ENCODE measurements at regions of chr1 and their contacts with region 1.

Region 1: GRCh38 chr1:232428786-232429530 is 201.0 kb downstream of the SIPA1L2 start:
- DNase-seq: no peak
- ATAC-seq: peak in 5 of 8 donors; percentile 36 to 63 (median 42)
- H3K4me3 ChIP-seq: no peak overlapping the region
- H3K27ac ChIP-seq: peak overlapping the region in 6 of 10 donors; percentile 47 to 68 (median 57)
- H3K4me1 ChIP-seq: peaks cover 0 to 65% (median 31%) of the 10 kb centered on the region in 9 donors
- H3K27me3 ChIP-seq: no peaks in the 10 kb centered on the region
- CTCF ChIP-seq: peak in 1 of 9 donors; percentile 7

Region 2: DNA sequence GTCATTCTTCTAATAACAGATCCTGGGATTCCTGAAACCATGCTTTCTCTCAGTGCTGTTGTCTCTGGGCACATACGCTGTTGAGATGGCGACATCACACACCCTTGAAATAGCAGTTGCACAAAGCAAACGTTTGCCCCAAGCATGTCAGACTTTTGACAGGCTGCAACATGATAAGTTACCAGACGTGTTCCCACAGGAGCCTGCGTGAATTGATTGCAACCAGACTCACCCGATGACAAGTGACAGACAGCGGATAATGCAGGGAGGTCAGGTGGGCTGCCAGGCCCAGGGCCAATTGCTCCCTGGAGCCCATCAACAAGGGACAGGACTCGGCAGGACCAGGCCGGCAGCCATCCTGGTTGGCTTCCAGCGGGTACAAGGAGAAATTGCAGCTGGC is 109.9 kb before region 1 on chr1:
- intact Hi-C with region 1: loop called in 1 of 10 experiments (anchors 10 kb)
- DNase-seq: peak; percentile 83 to 85
- ATAC-seq: peak; percentile 90 to 97 (median 95)
- H3K4me3 ChIP-seq: no peak overlapping the region
- H3K27ac ChIP-seq: peak overlapping the region; percentile 25 to 89 (median 78)
- H3K4me1 ChIP-seq: peaks cover 0 to 30% (median 3%) of the 10 kb centered on the region in 9 donors
- H3K27me3 ChIP-seq: no peaks in the 10 kb centered on the region
- CTCF ChIP-seq: no peak

Region 3: DNA sequence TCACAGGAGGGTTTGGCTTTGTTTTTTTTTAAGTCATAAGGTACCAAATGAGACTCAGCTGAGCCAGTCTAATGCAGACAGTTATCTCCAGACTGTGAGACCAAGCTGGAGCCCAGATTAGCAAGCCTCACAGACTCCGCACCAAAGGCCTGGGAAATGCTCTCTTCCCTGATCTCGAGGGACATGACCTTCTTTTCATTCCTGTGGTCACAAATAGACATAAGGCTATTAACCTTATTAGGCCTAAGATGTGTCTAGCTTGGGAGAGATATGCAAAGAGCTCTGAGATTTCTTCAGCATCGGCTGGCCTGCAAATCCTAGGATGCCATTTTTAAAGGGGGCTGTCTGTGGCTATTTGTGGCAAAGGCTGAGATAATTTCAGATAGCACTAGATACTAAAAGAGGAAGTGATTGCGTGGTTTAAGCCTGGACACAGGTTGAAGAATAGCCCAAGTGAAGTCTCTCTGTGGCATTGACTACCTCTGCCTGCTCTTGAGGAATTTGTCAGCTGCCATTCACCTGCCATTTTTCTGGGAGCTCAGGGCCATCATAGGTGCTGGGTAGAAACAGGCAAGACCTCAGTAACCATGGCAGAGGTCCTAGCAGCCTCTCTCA is 100.4 kb before region 1 on chr1:
- intact Hi-C with region 1: loop called in 1 of 10 experiments (anchors 2 kb)
- DNase-seq: peak in 1 of 2 donors; percentile 38
- ATAC-seq: peak; percentile 53 to 87 (median 68)
- H3K4me3 ChIP-seq: no peak overlapping the region
- H3K27ac ChIP-seq: peak overlapping the region in 6 of 10 donors; percentile 6 to 56 (median 33)
- H3K4me1 ChIP-seq: peaks cover 4 to 30% (median 13%) of the 10 kb centered on the region in 9 donors
- H3K27me3 ChIP-seq: no peaks in the 10 kb centered on the region
- CTCF ChIP-seq: no peak

Region 4: GRCh38 chr1:232486454-232487207 is 57.7 kb after region 1 on chr1:
- intact Hi-C with region 1: no loop called
- DNase-seq: no peak
- ATAC-seq: peak; percentile 32 to 89 (median 81)
- H3K4me3 ChIP-seq: no peak overlapping the region
- H3K27ac ChIP-seq: peak overlapping the region; percentile 12 to 82 (median 68)
- H3K4me1 ChIP-seq: peaks cover 0 to 66% (median 28%) of the 10 kb centered on the region in 9 donors
- H3K27me3 ChIP-seq: no peaks in the 10 kb centered on the region
- CTCF ChIP-seq: no peak

Measured in heart right ventricle (tissue), 16 donors.